ENCODE measurements at regions of chr3 and their contacts with region 1.

Region 1: DNA sequence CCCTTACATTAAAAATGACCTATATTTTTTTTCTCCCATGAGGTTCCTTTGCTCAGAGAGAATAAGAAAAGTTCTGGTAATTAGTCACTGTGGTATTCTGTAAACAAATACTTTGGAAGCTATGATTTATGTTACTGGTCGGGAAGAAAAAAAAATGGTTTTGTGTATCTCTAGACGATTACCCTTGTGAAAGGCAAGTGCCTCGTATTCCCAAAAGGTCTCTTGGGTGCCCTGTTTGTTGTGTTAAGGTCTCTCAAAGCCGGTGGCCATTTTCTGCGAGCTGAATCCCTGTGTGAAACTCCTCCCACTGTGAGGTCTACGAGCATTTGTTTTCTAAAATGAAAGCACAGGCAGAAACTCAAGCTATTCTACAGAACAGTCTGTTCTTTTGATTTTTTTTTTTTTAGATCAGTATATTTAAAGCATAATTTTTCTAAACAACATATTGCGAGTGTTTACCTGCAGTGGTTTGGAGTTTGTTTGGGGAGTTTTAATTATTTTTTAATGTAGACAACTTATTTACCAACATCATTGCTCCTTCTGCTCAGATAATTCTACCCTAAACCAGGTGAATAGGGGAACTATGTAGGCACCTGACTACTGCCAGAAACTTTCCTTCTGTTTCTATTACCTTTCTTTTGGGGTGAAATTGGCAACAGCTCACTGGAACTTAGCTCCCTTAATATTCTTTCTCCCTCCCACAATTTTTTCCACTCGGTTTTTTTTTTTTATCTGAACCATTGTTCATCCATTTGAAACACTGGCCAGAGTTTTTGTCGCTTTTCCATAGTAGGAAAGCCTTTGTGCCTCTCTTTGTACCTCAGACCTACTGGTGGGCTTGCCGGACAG is 44.0 kb downstream of the ZBTB38 start:
- DNase-seq: peak in 7 of 9 donors; percentile 54 to 76 (median 69)
- ATAC-seq: peak; percentile 78
- H3K4me3 ChIP-seq: peak overlapping the region; percentile 26
- H3K4me3 Mint-ChIP-seq: peak overlapping the region; percentile 62 to 91 (median 86)
- H3K27ac ChIP-seq: peak overlapping the region; percentile 83
- H3K27ac Mint-ChIP-seq: peak overlapping the region; percentile 96 to 100 (median 99)
- H3K4me1 ChIP-seq: peaks cover 59 to 74% of the 10 kb centered on the region in 2 donors
- H3K4me1 Mint-ChIP-seq: peaks cover 52 to 87% (median 74%) of the 10 kb centered on the region in 7 donors
- H3K27me3 ChIP-seq: no peaks in the 10 kb centered on the region
- H3K27me3 Mint-ChIP-seq: no peaks in the 10 kb centered on the region

Region 2: DNA sequence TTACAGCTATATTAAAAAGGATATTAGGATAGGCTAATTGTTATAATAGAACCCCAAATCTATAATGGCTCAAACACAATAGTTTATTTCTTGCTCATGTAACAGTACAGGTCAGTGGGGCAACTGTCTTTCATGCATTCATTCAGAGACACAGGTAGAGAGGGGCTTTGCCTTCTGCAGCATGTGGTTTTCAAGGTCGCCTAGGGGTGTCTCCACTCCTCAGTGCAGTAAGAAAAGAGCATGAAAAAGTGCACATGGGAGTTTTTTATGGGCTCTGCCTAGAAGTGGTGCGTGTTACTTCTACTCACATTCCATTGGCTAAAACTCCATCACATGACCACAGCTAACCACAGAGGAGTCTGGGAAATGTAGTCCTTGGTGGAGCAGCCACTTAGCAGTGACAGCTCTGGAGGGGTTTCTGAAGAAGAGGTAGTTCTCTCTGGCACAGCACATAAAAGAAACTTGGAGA is 42.2 kb before region 1 on chr3:
- CTCF ChIA-PET with region 1: no interaction called
- POLR2A ChIA-PET with region 1: interaction called, 4 read pairs
- intact Hi-C with region 1: loop called (anchors 1 to 2 kb)
- DNase-seq: peak; percentile 17 to 90 (median 81)
- ATAC-seq: peak; percentile 99
- H3K4me3 ChIP-seq: no peak overlapping the region
- H3K4me3 Mint-ChIP-seq: no peak overlapping the region
- H3K27ac ChIP-seq: no peak overlapping the region
- H3K27ac Mint-ChIP-seq: peak overlapping the region in 6 of 9 donors; percentile 13 to 76 (median 46)
- H3K4me1 ChIP-seq: no peaks in the 10 kb centered on the region
- H3K4me1 Mint-ChIP-seq: peaks cover 4 to 17% (median 7%) of the 10 kb centered on the region in 7 donors
- H3K27me3 ChIP-seq: no peaks in the 10 kb centered on the region
- H3K27me3 Mint-ChIP-seq: peaks cover 0 to 3% (median 0%) of the 10 kb centered on the region in 5 donors

Region 3: GRCh38 chr3:141426404-141427034 is 14.2 kb after region 1 on chr3:
- CTCF ChIA-PET with region 1: interaction called, 5 read pairs
- POLR2A ChIA-PET with region 1: interaction called, 6 read pairs
- intact Hi-C with region 1: loop called in 1 of 2 experiments (anchors 2 kb)
- DNase-seq: no peak
- ATAC-seq: no peak
- H3K4me3 ChIP-seq: no peak overlapping the region
- H3K4me3 Mint-ChIP-seq: no peak overlapping the region
- H3K27ac ChIP-seq: no peak overlapping the region
- H3K27ac Mint-ChIP-seq: peak overlapping the region in 1 of 9 donors; percentile 65
- H3K4me1 ChIP-seq: peaks cover 0 to 8% of the 10 kb centered on the region in 2 donors
- H3K4me1 Mint-ChIP-seq: peaks cover 3 to 34% (median 16%) of the 10 kb centered on the region in 7 donors
- H3K27me3 ChIP-seq: no peaks in the 10 kb centered on the region
- H3K27me3 Mint-ChIP-seq: no peaks in the 10 kb centered on the region